B cell (primary cell): ENCODE measurements at regions of chr10 and their contacts with region 1.

Region 1: GRCh38 chr10:124436191-124436638 is 13.6 kb downstream of the NKX1-2 start:
- DNase-seq: no peak
- ATAC-seq: peak; percentile 24
- H3K4me3 ChIP-seq: no peak overlapping the region
- H3K4me3 Mint-ChIP-seq: peak overlapping the region; percentile 63
- H3K27ac ChIP-seq: no peak overlapping the region
- H3K27ac Mint-ChIP-seq: peak overlapping the region; percentile 37
- H3K4me1 ChIP-seq: peaks cover 4 to 10% of the 10 kb centered on the region in 2 donors
- H3K4me1 Mint-ChIP-seq: peaks cover 6% of the 10 kb centered on the region
- H3K27me3 ChIP-seq: peaks cover 0 to 6% (median 0%) of the 10 kb centered on the region in 4 experiments
- H3K27me3 Mint-ChIP-seq: peaks cover 21% of the 10 kb centered on the region
- CTCF ChIP-seq: no peak

Region 2: DNA sequence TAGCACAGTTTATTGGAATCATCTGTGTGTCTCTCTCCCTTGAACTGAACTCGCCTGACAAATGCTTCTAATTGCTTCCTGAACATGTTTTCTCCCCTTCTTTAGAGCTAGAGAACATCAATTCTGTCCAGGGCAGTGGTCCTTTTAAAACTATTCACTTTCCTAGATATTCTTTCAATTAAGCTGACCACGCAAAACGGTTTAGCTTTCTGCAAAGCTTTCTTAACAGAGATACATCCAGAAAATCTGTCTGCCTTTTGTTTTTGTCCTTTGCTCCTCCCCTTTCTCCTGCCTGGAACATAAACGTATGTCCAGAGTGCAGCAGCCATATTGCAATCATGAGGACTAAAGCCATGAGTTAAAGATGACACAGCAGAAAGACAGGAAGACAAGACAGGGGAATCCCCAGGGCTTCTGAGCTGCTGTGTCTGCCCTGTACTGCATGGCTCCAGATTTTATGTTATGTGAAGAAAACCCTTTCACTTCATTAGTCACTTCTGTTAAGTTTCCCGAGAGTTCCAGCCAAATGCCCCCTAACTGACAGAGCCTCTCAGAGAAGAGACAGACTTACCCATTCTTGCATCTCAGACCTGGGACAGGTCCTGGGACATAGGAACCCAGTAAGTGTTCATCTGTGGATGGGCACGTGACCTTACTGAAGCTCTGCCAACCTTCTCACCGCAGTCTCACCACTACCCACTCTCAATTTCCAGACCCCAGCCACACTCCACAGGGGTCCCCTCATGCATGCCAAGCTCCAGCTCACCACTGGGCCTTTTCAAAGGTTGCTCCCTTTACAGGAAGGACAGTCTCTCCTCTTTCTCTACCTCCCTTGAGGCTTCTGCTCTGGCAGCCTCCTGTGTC is 509.6 kb before region 1 on chr10:
- CTCF ChIA-PET with region 1: no interaction called
- POLR2A ChIA-PET with region 1: no interaction called
- intact Hi-C with region 1: no loop called
- DNase-seq: no peak
- ATAC-seq: no peak
- H3K4me3 ChIP-seq: no peak overlapping the region
- H3K4me3 Mint-ChIP-seq: no peak overlapping the region
- H3K27ac ChIP-seq: no peak overlapping the region
- H3K27ac Mint-ChIP-seq: no peak overlapping the region
- H3K4me1 ChIP-seq: no peaks in the 10 kb centered on the region
- H3K4me1 Mint-ChIP-seq: no peaks in the 10 kb centered on the region
- H3K27me3 ChIP-seq: peaks cover 0 to 3% (median 1%) of the 10 kb centered on the region in 4 experiments
- H3K27me3 Mint-ChIP-seq: peaks cover 44% of the 10 kb centered on the region
- CTCF ChIP-seq: no peak

Region 3: GRCh38 chr10:124359336-124359832 is 76.8 kb before region 1 on chr10:
- CTCF ChIA-PET with region 1: no interaction called
- POLR2A ChIA-PET with region 1: no interaction called
- intact Hi-C with region 1: no loop called
- DNase-seq: no peak
- ATAC-seq: no peak
- H3K4me3 ChIP-seq: no peak overlapping the region
- H3K4me3 Mint-ChIP-seq: no peak overlapping the region
- H3K27ac ChIP-seq: no peak overlapping the region
- H3K27ac Mint-ChIP-seq: no peak overlapping the region
- H3K4me1 ChIP-seq: peaks cover 7 to 8% of the 10 kb centered on the region in 2 donors
- H3K4me1 Mint-ChIP-seq: peaks cover 8% of the 10 kb centered on the region
- H3K27me3 ChIP-seq: no peaks in the 10 kb centered on the region
- H3K27me3 Mint-ChIP-seq: peaks cover 7% of the 10 kb centered on the region
- CTCF ChIP-seq: no peak

Region 4: DNA sequence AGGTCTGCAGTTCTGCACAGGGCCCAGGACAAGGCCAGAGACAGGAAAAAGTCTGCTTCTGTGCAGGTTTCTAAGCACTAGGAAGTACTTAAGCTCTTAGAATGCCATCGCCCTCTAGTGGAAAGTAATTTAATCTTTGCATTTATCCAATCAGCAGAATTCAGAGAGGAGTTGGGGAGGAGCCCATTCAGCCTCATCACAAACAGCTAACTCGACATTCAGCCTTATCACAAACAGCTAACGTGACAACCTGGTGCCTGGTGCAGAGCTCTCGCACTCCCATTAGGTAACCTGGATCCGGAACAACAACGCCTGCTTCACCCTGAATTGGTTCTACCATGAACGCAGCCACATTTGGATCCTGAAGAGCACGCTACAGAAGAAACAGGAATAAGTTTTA is 32.7 kb before region 1 on chr10:
- CTCF ChIA-PET with region 1: interaction called, 4 read pairs
- POLR2A ChIA-PET with region 1: interaction called, 12 read pairs
- intact Hi-C with region 1: no loop called
- DNase-seq: peak; percentile 83
- ATAC-seq: peak; percentile 99
- H3K4me3 ChIP-seq: no peak overlapping the region
- H3K4me3 Mint-ChIP-seq: no peak overlapping the region
- H3K27ac ChIP-seq: no peak overlapping the region
- H3K27ac Mint-ChIP-seq: peak overlapping the region; percentile 66
- H3K4me1 ChIP-seq: peaks cover 5 to 9% of the 10 kb centered on the region in 2 donors
- H3K4me1 Mint-ChIP-seq: peaks cover 9% of the 10 kb centered on the region
- H3K27me3 ChIP-seq: no peaks in the 10 kb centered on the region
- H3K27me3 Mint-ChIP-seq: no peaks in the 10 kb centered on the region
- CTCF ChIP-seq: peak; percentile 74

Region 5: DNA sequence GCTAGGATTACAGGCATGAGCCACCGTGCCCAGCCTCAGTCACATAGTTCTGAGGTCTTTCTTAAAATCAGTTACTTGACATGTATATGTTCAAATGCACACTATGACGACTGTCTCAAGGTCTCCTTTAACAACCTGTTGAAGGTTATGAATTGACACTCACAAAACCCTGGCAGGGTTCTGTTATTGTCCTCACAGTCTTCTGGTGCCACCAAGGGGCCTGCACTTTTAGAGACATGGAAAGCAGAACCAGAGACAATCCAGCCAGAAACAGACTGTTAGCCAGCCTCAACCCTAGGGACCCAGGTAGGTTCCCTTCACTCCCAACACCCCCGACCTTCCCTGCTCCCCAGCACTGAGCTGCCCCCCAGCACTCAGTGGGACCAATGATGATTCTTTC is 1220.3 kb after region 1 on chr10:
- CTCF ChIA-PET with region 1: no interaction called
- POLR2A ChIA-PET with region 1: interaction called, 12 read pairs
- intact Hi-C with region 1: no loop called
- DNase-seq: no peak
- ATAC-seq: no peak
- H3K4me3 ChIP-seq: no peak overlapping the region
- H3K4me3 Mint-ChIP-seq: no peak overlapping the region
- H3K27ac ChIP-seq: no peak overlapping the region
- H3K27ac Mint-ChIP-seq: no peak overlapping the region
- H3K4me1 ChIP-seq: no peaks in the 10 kb centered on the region
- H3K4me1 Mint-ChIP-seq: no peaks in the 10 kb centered on the region
- H3K27me3 ChIP-seq: peaks cover 0 to 4% (median 0%) of the 10 kb centered on the region in 4 experiments
- H3K27me3 Mint-ChIP-seq: no peaks in the 10 kb centered on the region
- CTCF ChIP-seq: no peak